ENCODE measurements at regions of chr1 and their contacts with region 1.

Region 1: DNA sequence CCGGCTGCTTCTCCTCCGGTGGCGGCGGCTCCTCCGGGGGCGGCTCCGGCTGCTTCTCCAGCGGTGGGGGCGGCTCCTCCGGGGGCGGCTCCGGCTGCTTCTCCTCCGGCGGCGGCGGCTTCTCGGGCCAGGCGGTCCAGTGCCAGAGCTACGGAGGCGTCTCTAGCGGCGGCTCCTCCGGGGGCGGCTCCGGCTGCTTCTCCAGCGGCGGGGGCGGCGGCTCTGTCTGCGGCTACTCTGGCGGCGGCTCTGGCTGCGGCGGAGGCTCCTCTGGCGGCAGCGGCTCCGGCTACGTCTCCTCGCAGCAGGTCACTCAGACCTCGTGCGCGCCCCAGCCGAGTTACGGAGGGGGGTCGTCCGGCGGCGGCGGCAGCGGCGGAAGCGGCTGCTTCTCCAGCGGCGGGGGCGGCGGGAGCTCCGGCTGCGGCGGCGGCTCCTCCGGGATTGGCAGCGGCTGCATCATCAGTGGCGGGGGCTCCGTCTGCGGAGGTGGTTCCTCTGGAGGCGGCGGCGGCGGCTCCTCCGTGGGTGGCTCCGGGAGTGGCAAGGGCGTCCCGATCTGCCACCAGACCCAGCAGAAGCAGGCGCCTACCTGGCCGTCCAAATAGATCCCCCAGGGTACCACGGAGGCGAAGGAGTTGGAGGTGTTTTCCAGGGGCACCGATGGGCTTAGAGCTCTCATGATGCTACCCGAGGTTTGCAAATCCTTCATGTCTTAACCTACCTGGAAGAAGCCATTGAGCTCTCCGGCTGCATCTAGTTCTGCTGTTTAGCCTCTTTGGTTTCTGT is 2.0 kb downstream of the LORICRIN start:
- DNase-seq: no peak
- H3K4me3 ChIP-seq: peak overlapping the region; percentile 36 to 49 (median 46)
- H3K27ac ChIP-seq: no peak overlapping the region
- H3K4me1 ChIP-seq: peaks cover 9% of the 10 kb centered on the region
- H3K27me3 ChIP-seq: peaks cover 27% of the 10 kb centered on the region
- CTCF ChIP-seq: no peak

Region 2: GRCh38 chr1:153150846-153151245 is 110.6 kb before region 1 on chr1 and contains the start of gene SPRR2G:
- CTCF ChIA-PET with region 1: no interaction called
- dilution Hi-C with region 1: no loop called
- in situ Hi-C with region 1: no loop called
- intact Hi-C with region 1: no loop called
- DNase-seq: no peak
- H3K4me3 ChIP-seq: no peak within 1 kb of the TSS
- H3K27ac ChIP-seq: no peak within 1 kb of the TSS
- H3K4me1 ChIP-seq: no peaks in the 10 kb centered on the region
- H3K27me3 ChIP-seq: no peaks in the 10 kb centered on the region
- CTCF ChIP-seq: no peak
- total RNA-seq, gene SPRR2G: not detected

Region 3: DNA sequence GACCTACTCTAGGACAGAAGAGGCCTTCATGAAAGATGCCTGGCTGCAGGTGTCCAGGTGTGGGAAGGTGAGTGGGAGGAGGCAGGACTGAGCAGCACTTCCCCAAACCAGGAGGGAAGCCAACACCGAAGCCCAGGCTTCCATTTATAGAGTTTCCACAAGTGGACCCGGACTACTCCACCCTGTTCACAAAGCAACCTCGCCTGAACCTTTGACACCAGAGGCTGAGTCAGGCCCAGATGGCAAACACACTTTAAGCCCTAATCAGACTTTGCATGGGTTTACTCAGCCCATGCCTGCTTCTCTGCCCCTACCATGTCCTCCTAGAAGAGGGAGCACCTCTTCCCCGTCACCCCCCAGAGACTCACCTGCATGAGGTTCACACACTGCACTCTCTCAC is 30.1 kb before region 1 on chr1:
- CTCF ChIA-PET with region 1: interaction called, 4 read pairs
- dilution Hi-C with region 1: loop called (anchors 5 kb)
- in situ Hi-C with region 1: no loop called
- intact Hi-C with region 1: no loop called
- DNase-seq: peak; percentile 18
- H3K4me3 ChIP-seq: no peak overlapping the region
- H3K27ac ChIP-seq: no peak overlapping the region
- H3K4me1 ChIP-seq: no peaks in the 10 kb centered on the region
- H3K27me3 ChIP-seq: no peaks in the 10 kb centered on the region
- CTCF ChIP-seq: no peak

Measured in mammary epithelial cell (primary cell).